ENCODE measurements at regions of chr3 and their contacts with region 1.

Region 1: GRCh38 chr3:143795874-143796273 is 52.4 kb downstream of the SLC9A9 start:
- DNase-seq: no peak
- ATAC-seq: peak; percentile 23

Region 2: GRCh38 chr3:143951351-143951971 is 155.6 kb after region 1 on chr3:
- intact Hi-C with region 1: loop called (anchors 10 kb)
- DNase-seq: no peak
- ATAC-seq: no peak